HEK293 (cell line): ENCODE measurements at regions of chr12 and their contacts with region 1.

Region 1: DNA sequence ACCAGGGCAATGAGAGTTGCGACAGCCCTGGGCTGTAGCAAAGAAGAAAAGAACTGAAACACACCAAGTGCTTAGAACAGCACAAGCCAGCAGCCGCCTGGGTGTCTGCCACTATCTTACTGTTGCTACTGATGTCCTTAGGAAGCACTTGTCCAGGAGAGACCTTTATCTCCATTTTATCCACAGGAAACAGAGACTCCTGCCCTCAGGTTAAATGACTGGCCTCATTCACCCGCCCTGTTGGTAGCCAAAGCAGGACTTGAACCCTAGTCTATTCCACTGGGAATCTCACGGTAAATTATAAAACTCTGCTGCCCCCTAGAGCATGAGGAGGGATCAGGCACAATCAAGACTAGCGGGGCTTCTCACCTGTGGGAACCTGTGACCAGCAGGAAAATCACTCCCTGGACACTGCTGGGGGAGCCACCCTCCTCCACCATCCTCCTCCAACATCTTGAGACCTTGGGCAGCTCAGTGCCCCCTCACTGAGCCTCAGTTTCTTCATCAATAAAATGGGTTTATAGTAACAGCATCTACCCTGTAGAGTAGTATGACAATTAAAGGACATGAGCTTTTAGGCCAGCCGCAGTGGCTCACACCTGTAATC is 20.5 kb upstream of the TESC start:
- H3K4me3 ChIP-seq: no peak overlapping the region
- H3K27ac ChIP-seq: no peak overlapping the region
- H3K4me1 ChIP-seq: no peaks in the 10 kb centered on the region
- CTCF ChIP-seq: no peak

Region 2: GRCh38 chr12:116703214-116703795 is 416.4 kb before region 1 on chr12:
- CTCF ChIA-PET with region 1: interaction called, 25 read pairs
- POLR2A ChIA-PET with region 1: no interaction called
- H3K4me3 ChIP-seq: no peak overlapping the region
- H3K27ac ChIP-seq: no peak overlapping the region
- H3K4me1 ChIP-seq: no peaks in the 10 kb centered on the region
- CTCF ChIP-seq: peak; percentile 80

Region 3: GRCh38 chr12:116924558-116925453 is 194.9 kb before region 1 on chr12:
- CTCF ChIA-PET with region 1: no interaction called
- POLR2A ChIA-PET with region 1: no interaction called
- H3K4me3 ChIP-seq: no peak overlapping the region
- H3K27ac ChIP-seq: no peak overlapping the region
- H3K4me1 ChIP-seq: peaks cover 30% of the 10 kb centered on the region
- CTCF ChIP-seq: no peak

Region 4: DNA sequence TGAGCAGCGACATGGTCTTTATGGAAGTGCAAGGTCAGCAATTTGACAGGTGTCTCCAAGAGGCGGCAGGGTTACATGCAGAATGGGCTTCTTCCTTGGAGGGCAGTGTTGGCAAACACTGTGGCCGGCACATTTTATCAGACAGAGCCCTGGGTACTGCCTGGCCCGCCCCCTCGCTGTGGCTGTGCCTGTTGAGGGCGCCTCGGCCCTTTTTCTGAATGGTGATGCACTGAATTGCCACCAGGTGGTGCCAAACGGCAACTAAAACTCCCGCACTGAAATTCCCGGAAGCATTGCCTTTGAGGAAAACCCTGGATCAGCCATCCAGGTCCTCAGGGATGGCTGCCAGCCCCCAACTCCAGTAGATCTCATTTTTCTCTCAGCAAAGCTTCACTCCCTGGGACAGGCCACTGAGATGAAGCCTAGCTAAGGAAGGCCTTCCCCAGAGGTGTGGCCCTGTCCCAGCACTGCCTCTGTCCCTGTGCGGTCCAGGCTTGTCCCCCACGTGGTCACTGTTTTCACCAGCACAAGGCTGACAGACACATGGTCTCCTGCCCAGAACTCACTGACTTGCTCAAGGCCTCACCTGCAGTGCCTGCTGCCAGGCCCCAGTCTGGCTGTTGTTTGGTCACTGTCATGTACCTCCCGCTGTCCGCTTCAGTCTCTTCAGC is 94.1 kb before region 1 on chr12:
- CTCF ChIA-PET with region 1: interaction called, 106 read pairs
- POLR2A ChIA-PET with region 1: no interaction called
- H3K4me3 ChIP-seq: no peak overlapping the region
- H3K27ac ChIP-seq: no peak overlapping the region
- H3K4me1 ChIP-seq: peaks cover 6% of the 10 kb centered on the region
- CTCF ChIP-seq: peak; percentile 93

Region 5: DNA sequence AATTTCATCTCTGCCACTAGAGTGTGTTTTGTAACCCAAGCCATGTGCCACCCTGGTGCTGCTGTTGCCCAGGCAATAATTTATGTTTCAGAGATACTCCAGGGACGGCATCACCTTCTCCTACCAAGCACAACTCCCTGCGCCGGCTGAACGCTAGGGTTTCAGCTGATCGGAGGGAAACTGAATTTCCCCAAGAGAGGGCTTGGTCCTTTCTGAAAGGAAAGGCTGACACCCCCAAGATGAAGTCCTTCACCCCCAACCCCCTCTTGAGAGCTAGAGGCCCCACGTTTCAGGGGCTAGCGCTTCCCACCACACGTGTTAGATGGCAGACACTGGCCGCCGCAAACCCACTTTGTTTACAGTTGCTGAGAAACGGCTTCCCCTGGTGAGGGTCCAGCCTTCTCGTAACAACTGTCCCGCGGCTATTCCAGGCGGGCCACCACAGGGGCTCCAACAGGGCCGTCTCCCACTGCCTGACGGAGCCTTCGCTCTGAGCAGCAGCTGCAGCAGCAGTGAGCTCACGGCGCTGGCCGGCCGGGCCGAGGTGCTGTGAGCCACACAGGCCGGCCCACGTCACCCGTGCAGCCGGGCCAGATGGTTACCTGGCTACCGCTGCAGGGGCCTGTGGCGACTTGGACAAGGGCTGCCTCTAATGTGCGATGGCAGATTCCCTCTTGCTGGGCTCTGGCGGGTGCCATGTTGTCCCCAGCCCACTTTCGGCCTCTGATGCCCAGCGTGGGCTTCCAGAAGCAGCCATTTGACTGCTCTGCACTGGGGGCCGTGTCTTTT is 86.9 kb before region 1 on chr12:
- CTCF ChIA-PET with region 1: interaction called, 11 read pairs
- POLR2A ChIA-PET with region 1: no interaction called
- H3K4me3 ChIP-seq: no peak overlapping the region
- H3K27ac ChIP-seq: no peak overlapping the region
- H3K4me1 ChIP-seq: no peaks in the 10 kb centered on the region
- CTCF ChIP-seq: no peak

Region 6: DNA sequence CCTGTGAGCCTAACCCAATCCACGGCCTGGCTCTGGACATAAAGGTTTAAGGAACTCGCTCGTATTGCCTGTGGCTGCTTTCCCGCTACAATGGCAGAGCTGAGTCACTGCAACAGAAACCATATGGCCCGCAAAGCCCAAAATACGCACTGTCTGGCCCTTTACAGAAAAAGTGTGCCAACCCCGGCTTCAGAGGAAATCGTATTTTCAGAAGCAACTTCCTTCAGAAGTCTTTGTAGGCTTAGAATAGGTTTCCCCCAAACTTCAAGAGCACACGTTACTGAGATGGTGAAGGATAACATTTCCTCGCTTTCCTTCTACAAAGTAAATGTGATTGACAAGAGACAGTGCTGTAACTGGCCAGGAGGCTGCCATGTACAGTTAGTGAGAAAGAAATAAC is 14.4 kb after region 1 on chr12:
- CTCF ChIA-PET with region 1: interaction called, 13 read pairs
- POLR2A ChIA-PET with region 1: no interaction called
- H3K4me3 ChIP-seq: no peak overlapping the region
- H3K27ac ChIP-seq: no peak overlapping the region
- H3K4me1 ChIP-seq: no peaks in the 10 kb centered on the region
- CTCF ChIP-seq: no peak